ENCODE measurements at regions of chr17 and their contacts with region 1.

Region 1: GRCh38 chr17:50507871-50508572 is at the start of gene MYCBPAP:
- DNase-seq: peak; percentile 32 to 86 (median 74)
- ATAC-seq: peak; percentile 81 to 84 (median 82)
- H3K4me3 ChIP-seq: peak within 1 kb of the TSS; percentile 73 to 77
- H3K4me3 Mint-ChIP-seq: peak within 1 kb of the TSS; percentile 75 to 93 (median 89)
- H3K27ac ChIP-seq: peak within 1 kb of the TSS; percentile 68
- H3K27ac Mint-ChIP-seq: peak within 1 kb of the TSS in 1 of 2 donors; percentile 88
- H3K4me1 ChIP-seq: peaks cover 9 to 23% of the 10 kb centered on the region in 2 experiments
- H3K4me1 Mint-ChIP-seq: peaks cover 24 to 54% (median 30%) of the 10 kb centered on the region in 3 donors
- H3K27me3 ChIP-seq: peaks cover 0 to 10% of the 10 kb centered on the region in 2 experiments
- H3K27me3 Mint-ChIP-seq: no peaks in the 10 kb centered on the region
- total RNA-seq, gene MYCBPAP: 0.92 to 6.9 (median 4.7) TPM

Region 2: DNA sequence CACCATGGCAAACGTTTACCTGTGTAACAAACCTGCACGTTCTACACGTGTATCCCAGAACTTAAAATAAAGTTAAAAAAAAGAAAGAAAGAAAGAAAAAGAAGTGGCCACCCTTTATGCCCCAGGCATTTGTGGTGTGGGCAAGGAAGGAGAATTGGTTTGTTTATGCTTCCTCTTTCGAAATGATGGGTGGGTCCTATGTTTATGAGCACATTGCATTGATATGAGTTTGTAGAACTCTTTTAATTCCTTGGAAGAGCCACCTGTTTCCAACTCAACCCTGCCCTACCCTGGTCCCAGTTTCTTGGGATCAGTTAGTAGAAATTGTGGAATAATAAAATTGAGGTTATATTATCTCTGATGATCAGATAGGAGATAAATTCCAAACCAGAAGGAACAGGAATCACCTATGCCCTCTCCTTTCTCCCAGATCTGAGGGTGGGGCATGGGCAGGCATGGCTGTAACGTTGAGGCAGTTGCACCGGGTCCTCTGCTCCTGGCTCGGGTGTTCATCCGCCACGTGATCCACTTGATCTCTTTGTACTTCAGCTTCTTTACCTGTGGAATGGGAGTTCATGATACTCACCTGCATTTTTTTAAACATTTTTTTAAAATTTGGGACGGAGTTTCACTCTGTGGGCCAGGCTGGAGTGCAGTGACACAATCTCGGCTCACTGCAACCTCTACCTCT is 55.3 kb before region 1 on chr17:
- CTCF ChIA-PET with region 1: interaction called in 1 of 2 experiments, 14 read pairs
- POLR2A ChIA-PET with region 1: no interaction called
- DNase-seq: no peak
- ATAC-seq: no peak
- H3K4me3 ChIP-seq: no peak overlapping the region
- H3K4me3 Mint-ChIP-seq: no peak overlapping the region
- H3K27ac ChIP-seq: no peak overlapping the region
- H3K27ac Mint-ChIP-seq: no peak overlapping the region
- H3K4me1 ChIP-seq: no peaks in the 10 kb centered on the region
- H3K4me1 Mint-ChIP-seq: peaks cover 0 to 2% (median 0%) of the 10 kb centered on the region in 3 donors
- H3K27me3 ChIP-seq: no peaks in the 10 kb centered on the region
- H3K27me3 Mint-ChIP-seq: no peaks in the 10 kb centered on the region